Mammary epithelial cell (primary cell): ENCODE measurements at regions of chr19 and their contacts with region 1.

Region 1: GRCh38 chr19:12527034-12527836 is 24.0 kb downstream of the ZNF564 start:
- DNase-seq: peak; percentile 17
- H3K4me3 ChIP-seq: no peak overlapping the region
- H3K27ac ChIP-seq: no peak overlapping the region
- H3K4me1 ChIP-seq: no peaks in the 10 kb centered on the region
- H3K27me3 ChIP-seq: no peaks in the 10 kb centered on the region
- CTCF ChIP-seq: no peak

Region 2: DNA sequence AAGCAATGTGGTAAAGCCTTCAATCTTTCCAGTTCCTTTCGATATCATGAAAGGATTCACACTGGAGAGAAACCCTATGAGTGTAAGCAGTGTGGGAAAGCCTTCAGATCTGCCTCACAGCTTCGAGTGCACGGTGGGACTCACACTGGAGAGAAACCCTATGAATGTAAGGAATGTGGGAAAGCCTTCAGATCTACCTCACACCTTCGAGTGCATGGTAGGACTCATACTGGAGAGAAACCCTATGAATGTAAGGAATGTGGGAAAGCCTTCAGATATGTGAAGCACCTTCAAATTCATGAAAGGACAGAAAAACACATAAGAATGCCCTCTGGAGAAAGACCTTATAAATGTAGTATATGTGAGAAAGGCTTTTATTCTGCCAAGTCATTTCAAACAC is 578.0 kb before region 1 on chr19:
- CTCF ChIA-PET with region 1: no interaction called
- dilution Hi-C with region 1: loop called (anchors 10 kb)
- in situ Hi-C with region 1: no loop called
- intact Hi-C with region 1: no loop called
- DNase-seq: no peak
- H3K4me3 ChIP-seq: no peak overlapping the region
- H3K27ac ChIP-seq: no peak overlapping the region
- H3K4me1 ChIP-seq: no peaks in the 10 kb centered on the region
- H3K27me3 ChIP-seq: no peaks in the 10 kb centered on the region
- CTCF ChIP-seq: no peak